CD4-positive, alpha-beta T cell (primary cell): ENCODE measurements at regions of chr9 and their contacts with region 1.

Region 1: GRCh38 chr9:95510709-95511615 is 5.8 kb downstream of the PTCH1 start:
- DNase-seq: peak; percentile 59 to 92 (median 82)
- ATAC-seq: peak; percentile 54
- H3K4me3 ChIP-seq: peak overlapping the region; percentile 73
- H3K4me3 Mint-ChIP-seq: peak overlapping the region; percentile 93
- H3K27ac ChIP-seq: no peak overlapping the region
- H3K27ac Mint-ChIP-seq: peak overlapping the region; percentile 83
- H3K4me1 ChIP-seq: peaks cover 56% of the 10 kb centered on the region
- H3K4me1 Mint-ChIP-seq: peaks cover 53% of the 10 kb centered on the region
- H3K27me3 ChIP-seq: peaks cover 11 to 15% of the 10 kb centered on the region in 2 experiments
- H3K27me3 Mint-ChIP-seq: peaks cover 15% of the 10 kb centered on the region
- CTCF ChIP-seq: no peak

Region 2: GRCh38 chr9:95317119-95317892 is 193.7 kb before region 1 on chr9 and contains the start of gene FANCC:
- CTCF ChIA-PET with region 1: no interaction called
- POLR2A ChIA-PET with region 1: interaction called, 4 read pairs
- intact Hi-C with region 1: loop called (anchors 2 to 5 kb)
- DNase-seq: peak; percentile 65 to 92 (median 82)
- ATAC-seq: peak; percentile 88
- H3K4me3 ChIP-seq: peak within 1 kb of the TSS; percentile 96
- H3K4me3 Mint-ChIP-seq: peak within 1 kb of the TSS; percentile 96
- H3K27ac ChIP-seq: peak within 1 kb of the TSS; percentile 37 to 42
- H3K27ac Mint-ChIP-seq: peak within 1 kb of the TSS; percentile 86
- H3K4me1 ChIP-seq: peaks cover 14% of the 10 kb centered on the region
- H3K4me1 Mint-ChIP-seq: peaks cover 27% of the 10 kb centered on the region
- H3K27me3 ChIP-seq: no peaks in the 10 kb centered on the region
- H3K27me3 Mint-ChIP-seq: peaks cover 9% of the 10 kb centered on the region
- CTCF ChIP-seq: no peak
- total RNA-seq, gene FANCC: 5.7 to 6.3 TPM

Region 3: DNA sequence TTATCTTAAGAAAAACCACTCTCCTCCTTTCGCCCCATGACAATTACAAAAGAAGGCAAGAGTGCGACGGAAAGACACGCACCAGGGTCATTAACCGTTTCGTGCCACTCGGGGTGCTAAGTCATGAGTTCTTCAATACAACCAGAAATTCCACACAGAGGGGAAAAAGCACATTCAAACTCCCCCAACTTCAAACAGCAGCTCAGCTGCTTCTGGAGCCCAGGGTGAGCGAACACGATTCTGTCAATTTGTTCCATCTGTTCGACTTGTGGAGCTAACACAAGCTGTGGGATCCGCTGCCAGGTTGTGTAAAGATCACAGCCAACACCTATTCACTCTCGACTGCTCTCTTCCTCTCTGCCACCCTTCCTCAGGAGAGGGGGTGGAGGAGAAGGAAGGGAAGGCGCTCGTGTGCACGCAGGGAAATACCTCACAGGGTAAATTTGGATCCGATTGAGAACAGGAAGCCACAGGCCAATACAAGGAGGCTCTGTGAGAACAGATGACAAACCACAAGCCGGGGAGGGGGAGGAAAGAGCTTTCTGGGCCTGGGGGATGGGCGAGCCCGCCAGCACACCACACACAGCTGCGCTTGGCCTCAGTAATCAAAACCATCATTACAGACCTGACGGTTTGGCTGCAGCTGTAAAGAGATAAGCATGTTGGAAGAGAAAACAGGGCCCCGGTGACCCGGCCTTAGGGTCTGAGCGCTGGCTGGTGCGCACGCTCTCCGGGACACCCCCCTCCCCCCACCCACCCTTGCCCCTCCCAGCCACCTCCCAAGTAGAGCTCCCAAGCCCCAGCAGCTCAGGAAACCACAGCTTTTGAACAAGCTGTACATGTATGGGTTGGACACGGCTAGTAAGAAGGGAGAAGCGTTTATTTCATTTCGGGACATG is 48.5 kb before region 1 on chr9:
- CTCF ChIA-PET with region 1: no interaction called
- POLR2A ChIA-PET with region 1: interaction called, 11 read pairs
- intact Hi-C with region 1: loop called in 1 of 2 experiments (anchors 1 kb)
- DNase-seq: peak; percentile 56 to 94 (median 66)
- ATAC-seq: peak; percentile 94
- H3K4me3 ChIP-seq: peak overlapping the region; percentile 41
- H3K4me3 Mint-ChIP-seq: peak overlapping the region; percentile 89
- H3K27ac ChIP-seq: no peak overlapping the region
- H3K27ac Mint-ChIP-seq: peak overlapping the region; percentile 57
- H3K4me1 ChIP-seq: peaks cover 28% of the 10 kb centered on the region
- H3K4me1 Mint-ChIP-seq: peaks cover 47% of the 10 kb centered on the region
- H3K27me3 ChIP-seq: no peaks in the 10 kb centered on the region
- H3K27me3 Mint-ChIP-seq: no peaks in the 10 kb centered on the region
- CTCF ChIP-seq: no peak

Region 4: DNA sequence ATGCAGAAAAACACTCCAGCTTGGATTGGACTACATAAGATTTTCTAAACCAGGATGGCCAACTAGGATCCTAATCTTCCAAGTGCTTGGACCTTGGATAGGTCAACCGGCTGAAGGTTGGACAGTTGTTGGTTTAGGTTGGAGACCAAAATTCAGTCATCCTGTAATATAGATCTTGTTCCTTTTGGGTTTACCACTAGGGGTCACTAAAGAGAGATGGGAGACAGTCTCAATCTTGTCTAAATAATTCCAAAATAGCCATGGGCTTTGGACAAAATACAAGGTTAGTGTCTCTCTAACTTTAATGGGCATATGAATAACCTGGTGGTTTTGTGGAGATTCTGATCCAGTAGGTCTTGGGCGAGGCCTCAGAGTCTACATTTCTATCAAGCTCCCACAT is 215.8 kb after region 1 on chr9:
- CTCF ChIA-PET with region 1: no interaction called
- POLR2A ChIA-PET with region 1: interaction called, 5 read pairs
- intact Hi-C with region 1: loop called (anchors 1 to 5 kb)
- DNase-seq: peak in 3 of 14 experiments; percentile 42 to 54 (median 43)
- ATAC-seq: no peak
- H3K4me3 ChIP-seq: no peak overlapping the region
- H3K4me3 Mint-ChIP-seq: no peak overlapping the region
- H3K27ac ChIP-seq: no peak overlapping the region
- H3K27ac Mint-ChIP-seq: no peak overlapping the region
- H3K4me1 ChIP-seq: peaks cover 26% of the 10 kb centered on the region
- H3K4me1 Mint-ChIP-seq: peaks cover 47% of the 10 kb centered on the region
- H3K27me3 ChIP-seq: no peaks in the 10 kb centered on the region
- H3K27me3 Mint-ChIP-seq: no peaks in the 10 kb centered on the region
- CTCF ChIP-seq: no peak